OCI-LY7 (cell line): ENCODE measurements at regions of chr9 and their contacts with region 1.

Region 1: DNA sequence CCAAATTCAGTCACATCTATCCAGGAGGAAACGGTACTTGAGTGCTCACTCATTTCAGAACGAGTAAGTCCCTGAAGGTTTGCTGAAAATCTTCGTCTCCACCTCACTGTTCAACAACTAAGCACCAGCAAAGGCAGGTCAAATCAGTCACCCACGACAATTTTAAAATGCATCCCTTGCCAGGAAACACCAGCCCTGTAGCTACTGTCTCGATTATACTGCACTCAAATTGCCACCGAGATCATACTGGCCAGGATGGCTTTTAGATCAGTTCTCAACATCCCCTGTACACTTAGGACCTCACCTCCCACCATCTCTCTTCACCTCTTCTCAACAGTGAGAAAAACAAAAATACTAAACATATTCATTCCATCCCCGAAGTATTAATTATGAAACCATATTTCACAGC is 298.6 kb downstream of the AGTPBP1 start:
- DNase-seq: no peak
- H3K4me3 ChIP-seq: no peak overlapping the region
- H3K27ac ChIP-seq: no peak overlapping the region
- H3K4me1 ChIP-seq: no peaks in the 10 kb centered on the region
- CTCF ChIP-seq: no peak

Region 2: GRCh38 chr9:85502814-85503655 is 59.8 kb after region 1 on chr9:
- CTCF ChIA-PET with region 1: no interaction called
- POLR2A ChIA-PET with region 1: interaction called, 10 read pairs
- intact Hi-C with region 1: no loop called
- DNase-seq: no peak
- H3K4me3 ChIP-seq: no peak overlapping the region
- H3K27ac ChIP-seq: no peak overlapping the region
- H3K4me1 ChIP-seq: no peaks in the 10 kb centered on the region
- CTCF ChIP-seq: no peak